ENCODE measurements at regions of chr10 and their contacts with region 1.

Region 1: GRCh38 chr10:92290837-92291615 is at the starts of genes CPEB3 and MARCHF5:
- DNase-seq: peak; percentile 93 to 94
- H3K4me3 ChIP-seq: peak within 1 kb of the TSS; percentile 72 to 99 (median 87)
- H3K27ac ChIP-seq: peak within 1 kb of the TSS; percentile 56
- H3K4me1 ChIP-seq: no peaks in the 10 kb centered on the region; a peak in 2 of 7 replicates
- H3K27me3 ChIP-seq: no peaks in the 10 kb centered on the region
- CTCF ChIP-seq: peak; percentile 52 to 77 (median 72)
- EP300 ChIP-seq: no peak
- POLR2A ChIP-seq: peak in 1 of 2 experiments; percentile 77; a peak in 2 of 3 replicates
- RAD21 ChIP-seq: peak; percentile 60 to 62
- total RNA-seq, gene CPEB3: 1.7 and 1.9 TPM in 2 replicates
- total RNA-seq, gene MARCHF5: 23.7 and 26.8 TPM in 2 replicates

Region 2: GRCh38 chr10:92087750-92088395 is 203.2 kb before region 1 on chr10:
- CTCF ChIA-PET with region 1: interaction called, 18 read pairs
- POLR2A ChIA-PET with region 1: interaction called, 7 read pairs
- DNase-seq: peak; percentile 38 to 74
- H3K4me3 ChIP-seq: no peak overlapping the region
- H3K27ac ChIP-seq: no peak overlapping the region
- H3K4me1 ChIP-seq: peaks cover 0 to 2% (median 0%) of the 10 kb centered on the region in 4 experiments; a peak in 1 of 7 replicates
- H3K27me3 ChIP-seq: no peaks in the 10 kb centered on the region
- CTCF ChIP-seq: peak; percentile 14 to 96 (median 93)
- EP300 ChIP-seq: no peak
- POLR2A ChIP-seq: no peak
- RAD21 ChIP-seq: peak; percentile 97 to 98

Region 3: GRCh38 chr10:92108120-92108519 is 182.9 kb before region 1 on chr10:
- CTCF ChIA-PET with region 1: no interaction called
- POLR2A ChIA-PET with region 1: no interaction called
- DNase-seq: no peak
- H3K4me3 ChIP-seq: no peak overlapping the region
- H3K27ac ChIP-seq: no peak overlapping the region
- H3K4me1 ChIP-seq: no peaks in the 10 kb centered on the region
- H3K27me3 ChIP-seq: peaks cover 0 to 3% (median 0%) of the 10 kb centered on the region in 4 experiments; a peak in 1 of 7 replicates
- CTCF ChIP-seq: no peak
- EP300 ChIP-seq: no peak
- POLR2A ChIP-seq: no peak
- RAD21 ChIP-seq: no peak

Region 4: GRCh38 chr10:92222603-92223275 is 68.3 kb before region 1 on chr10:
- CTCF ChIA-PET with region 1: interaction called, 34 read pairs
- POLR2A ChIA-PET with region 1: interaction called, 6 read pairs
- DNase-seq: no peak
- H3K4me3 ChIP-seq: no peak overlapping the region
- H3K27ac ChIP-seq: no peak overlapping the region
- H3K4me1 ChIP-seq: peaks cover 0 to 3% (median 1%) of the 10 kb centered on the region in 4 experiments; a peak in 2 of 7 replicates
- H3K27me3 ChIP-seq: no peaks in the 10 kb centered on the region
- CTCF ChIP-seq: no peak
- EP300 ChIP-seq: no peak
- POLR2A ChIP-seq: no peak
- RAD21 ChIP-seq: no peak

Region 5: GRCh38 chr10:92274071-92274470 is 17.0 kb before region 1 on chr10:
- CTCF ChIA-PET with region 1: interaction called, 11 read pairs
- POLR2A ChIA-PET with region 1: interaction called, 6 read pairs
- DNase-seq: no peak
- H3K4me3 ChIP-seq: no peak overlapping the region
- H3K27ac ChIP-seq: no peak overlapping the region
- H3K4me1 ChIP-seq: no peaks in the 10 kb centered on the region
- H3K27me3 ChIP-seq: no peaks in the 10 kb centered on the region
- CTCF ChIP-seq: no peak
- EP300 ChIP-seq: no peak
- POLR2A ChIP-seq: no peak
- RAD21 ChIP-seq: no peak

Region 6: DNA sequence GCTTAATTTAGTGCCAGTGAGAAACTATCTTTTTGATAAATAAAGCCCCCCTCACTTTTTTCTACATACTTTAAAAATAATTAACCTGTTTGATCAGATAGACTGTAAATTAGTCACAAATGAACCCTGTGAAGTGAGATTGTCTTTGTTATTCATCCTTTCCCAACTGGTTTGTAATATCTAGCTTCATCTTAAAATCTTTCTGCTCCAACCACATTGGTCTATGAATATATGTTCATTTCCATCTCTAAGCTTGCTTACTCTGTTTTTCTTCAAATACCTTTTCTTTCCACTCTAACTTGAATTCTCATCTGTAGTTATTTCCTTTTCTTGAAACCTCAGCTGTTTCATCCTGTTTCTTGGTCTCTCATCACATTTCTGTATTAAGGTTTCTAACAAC is 12.1 kb after region 1 on chr10:
- CTCF ChIA-PET with region 1: interaction called, 52 read pairs
- POLR2A ChIA-PET with region 1: interaction called, 5 read pairs
- DNase-seq: no peak
- H3K4me3 ChIP-seq: no peak overlapping the region
- H3K27ac ChIP-seq: no peak overlapping the region
- H3K4me1 ChIP-seq: peaks cover 0 to 27% (median 12%) of the 10 kb centered on the region in 4 experiments; a peak in 5 of 7 replicates
- H3K27me3 ChIP-seq: no peaks in the 10 kb centered on the region
- CTCF ChIP-seq: no peak
- EP300 ChIP-seq: no peak
- POLR2A ChIP-seq: no peak
- RAD21 ChIP-seq: no peak

Region 7: GRCh38 chr10:92419740-92420545 is 128.9 kb after region 1 on chr10:
- CTCF ChIA-PET with region 1: interaction called, 21 read pairs
- POLR2A ChIA-PET with region 1: no interaction called
- DNase-seq: peak; percentile 51 to 66
- H3K4me3 ChIP-seq: peak overlapping the region; percentile 4 to 55 (median 34); a peak in 7 of 8 replicates
- H3K27ac ChIP-seq: no peak overlapping the region
- H3K4me1 ChIP-seq: peaks cover 3 to 9% (median 7%) of the 10 kb centered on the region in 4 experiments
- H3K27me3 ChIP-seq: peaks cover 0 to 19% (median 9%) of the 10 kb centered on the region in 4 experiments; a peak in 4 of 7 replicates
- CTCF ChIP-seq: peak; percentile 46 to 49 (median 48)
- EP300 ChIP-seq: no peak
- POLR2A ChIP-seq: no peak
- RAD21 ChIP-seq: peak; percentile 20 to 36; a peak in 3 of 4 replicates

Region 8: DNA sequence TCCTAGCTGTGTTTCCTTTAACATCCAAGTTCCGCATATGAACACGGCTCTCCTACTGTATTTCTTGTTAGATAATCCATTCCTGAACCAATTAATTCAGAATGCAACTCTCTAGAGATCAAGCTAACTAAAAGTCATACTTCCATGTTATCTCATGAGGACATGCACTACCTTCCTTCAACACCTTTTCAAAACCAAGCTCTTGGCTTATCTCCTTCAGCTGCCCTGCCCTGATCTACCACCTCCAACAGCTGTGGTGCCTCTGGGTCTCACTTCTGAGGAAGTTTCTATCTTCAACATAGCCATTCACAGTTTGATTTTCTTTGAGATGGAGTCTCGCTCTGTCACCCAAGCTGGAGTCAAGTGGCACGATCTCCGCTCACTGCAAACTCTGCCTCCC is 173.3 kb after region 1 on chr10:
- CTCF ChIA-PET with region 1: no interaction called
- POLR2A ChIA-PET with region 1: no interaction called
- DNase-seq: no peak
- H3K4me3 ChIP-seq: no peak overlapping the region
- H3K27ac ChIP-seq: no peak overlapping the region
- H3K4me1 ChIP-seq: no peaks in the 10 kb centered on the region
- H3K27me3 ChIP-seq: no peaks in the 10 kb centered on the region
- CTCF ChIP-seq: no peak
- EP300 ChIP-seq: no peak
- POLR2A ChIP-seq: no peak
- RAD21 ChIP-seq: no peak